Left cardiac atrium (tissue), 4 donors: ENCODE measurements at regions of chr7 and their contacts with region 1.

Region 1: DNA sequence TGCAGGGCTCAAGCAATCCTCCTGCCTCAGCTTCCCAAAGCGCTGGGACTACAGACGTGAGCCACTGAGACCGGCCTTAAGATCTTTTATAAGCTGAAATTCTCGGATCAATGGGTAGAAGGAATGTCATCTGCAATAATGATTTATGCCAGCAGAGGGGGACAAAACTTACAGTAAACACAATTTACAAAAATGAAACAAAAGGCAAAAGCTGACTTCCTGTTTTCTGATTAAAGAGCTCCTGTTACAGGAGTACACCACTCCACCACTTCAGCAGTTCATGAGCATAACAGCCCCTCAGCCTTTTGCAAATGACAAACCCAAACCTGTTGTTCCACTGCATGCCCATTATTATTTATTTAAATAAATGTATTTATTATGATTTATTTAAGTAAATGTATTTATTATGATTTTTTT is 88.5 kb upstream of the ATP6V0A4 start:
- DNase-seq: no peak
- ATAC-seq: peak; percentile 30 to 47

Region 2: GRCh38 chr7:138987686-138988085 is 101.2 kb after region 1 on chr7:
- intact Hi-C with region 1: loop called in 1 of 2 experiments (anchors 5 kb)
- DNase-seq: no peak
- ATAC-seq: no peak

Region 3: GRCh38 chr7:139075031-139075652 is 188.6 kb after region 1 on chr7:
- intact Hi-C with region 1: loop called in 1 of 2 experiments (anchors 10 kb)
- DNase-seq: peak; percentile 68
- ATAC-seq: peak; percentile 88 to 95